ENCODE measurements at regions of chr12 and their contacts with region 1.

Region 1: GRCh38 chr12:98653866-98654493 is 8.9 kb downstream of the APAF1 start:
- DNase-seq: no peak

Region 2: GRCh38 chr12:98572010-98572409 is 82.0 kb before region 1 on chr12:
- intact Hi-C with region 1: loop called (anchors 2 kb)
- DNase-seq: no peak

Measured in posterior cingulate gyrus (tissue), 11 donors.